Endothelial cell of umbilical vein (primary cell): ENCODE measurements at regions of chr7 and their contacts with region 1.

Region 1: DNA sequence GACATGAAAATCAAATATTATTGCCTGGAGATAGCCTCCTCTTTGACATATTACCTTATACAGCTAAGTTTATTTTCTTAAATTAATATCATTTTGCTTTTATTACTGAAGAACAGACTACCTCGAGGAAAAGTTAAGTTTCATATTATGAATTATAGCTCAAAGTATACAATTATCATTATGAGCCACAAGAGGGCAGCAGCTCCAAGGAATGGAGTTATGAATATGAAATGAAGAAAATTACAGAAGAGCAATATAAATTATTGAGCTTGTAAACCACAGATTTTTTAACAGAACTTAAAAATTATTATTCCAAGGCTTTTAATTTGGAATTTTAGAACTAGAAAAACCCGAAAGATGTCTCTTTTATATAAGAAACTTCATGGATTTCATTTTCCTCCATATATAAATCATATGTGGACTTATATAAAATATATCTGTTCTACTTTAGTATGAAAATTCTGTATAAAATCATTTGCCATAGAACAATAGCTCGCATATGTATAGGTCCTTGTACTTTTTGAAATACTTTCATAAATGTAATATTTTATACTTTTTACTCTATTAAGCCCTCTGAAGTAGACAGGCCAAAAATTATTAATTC is 40.1 kb downstream of the IQUB start:
- DNase-seq: peak; percentile 62
- H3K4me3 ChIP-seq: no peak overlapping the region
- H3K27ac ChIP-seq: no peak overlapping the region
- H3K4me1 ChIP-seq: no peaks in the 10 kb centered on the region
- H3K27me3 ChIP-seq: peaks cover 3 to 10% of the 10 kb centered on the region in 2 experiments
- CTCF ChIP-seq: peak; percentile 25 to 37
- POLR2A ChIP-seq: no peak

Region 2: GRCh38 chr7:123472750-123473445 is 21.4 kb before region 1 on chr7:
- CTCF ChIA-PET with region 1: interaction called, 17 read pairs
- POLR2A ChIA-PET with region 1: no interaction called
- dilution Hi-C with region 1: no loop called
- intact Hi-C with region 1: no loop called
- DNase-seq: no peak
- H3K4me3 ChIP-seq: no peak overlapping the region
- H3K27ac ChIP-seq: no peak overlapping the region
- H3K4me1 ChIP-seq: no peaks in the 10 kb centered on the region
- H3K27me3 ChIP-seq: no peaks in the 10 kb centered on the region
- CTCF ChIP-seq: no peak
- POLR2A ChIP-seq: no peak

Region 3: DNA sequence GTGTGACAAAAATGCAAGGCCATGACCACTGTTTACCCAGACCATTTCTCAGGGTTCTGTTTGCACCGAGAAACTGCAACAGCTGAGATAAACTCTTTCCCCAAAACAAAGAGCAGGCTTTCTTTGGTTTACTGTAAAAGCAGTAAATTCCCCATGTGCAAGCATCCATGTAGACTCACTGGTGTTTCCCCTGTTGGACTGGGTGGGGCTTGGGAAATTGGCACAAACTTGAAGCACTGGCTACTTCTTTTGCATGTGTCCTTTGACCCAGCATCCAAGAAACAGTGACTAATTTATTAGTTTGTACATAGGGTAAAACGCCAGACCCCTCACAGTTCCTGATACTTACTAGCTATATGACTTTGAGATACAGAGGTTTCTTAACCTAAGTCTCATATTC is 27.8 kb after region 1 on chr7:
- CTCF ChIA-PET with region 1: interaction called, 34 read pairs
- POLR2A ChIA-PET with region 1: no interaction called
- dilution Hi-C with region 1: no loop called
- intact Hi-C with region 1: no loop called
- DNase-seq: no peak
- H3K4me3 ChIP-seq: no peak overlapping the region
- H3K27ac ChIP-seq: no peak overlapping the region
- H3K4me1 ChIP-seq: no peaks in the 10 kb centered on the region
- H3K27me3 ChIP-seq: no peaks in the 10 kb centered on the region
- CTCF ChIP-seq: no peak
- POLR2A ChIP-seq: no peak

Region 4: GRCh38 chr7:123534383-123535260 is 40.3 kb after region 1 on chr7 and contains the start of gene IQUB:
- CTCF ChIA-PET with region 1: interaction called, 60 read pairs
- POLR2A ChIA-PET with region 1: interaction called, 14 read pairs
- dilution Hi-C with region 1: no loop called
- intact Hi-C with region 1: loop called (anchors 1 kb)
- DNase-seq: peak; percentile 95
- H3K4me3 ChIP-seq: peak within 1 kb of the TSS; percentile 61 to 81 (median 80)
- H3K27ac ChIP-seq: peak within 1 kb of the TSS; percentile 74
- H3K4me1 ChIP-seq: peaks cover 27% of the 10 kb centered on the region
- H3K27me3 ChIP-seq: peaks cover 6 to 13% of the 10 kb centered on the region in 2 experiments
- CTCF ChIP-seq: no peak
- POLR2A ChIP-seq: no peak
- total RNA-seq, gene IQUB: not detected in 2 replicates

Region 5: DNA sequence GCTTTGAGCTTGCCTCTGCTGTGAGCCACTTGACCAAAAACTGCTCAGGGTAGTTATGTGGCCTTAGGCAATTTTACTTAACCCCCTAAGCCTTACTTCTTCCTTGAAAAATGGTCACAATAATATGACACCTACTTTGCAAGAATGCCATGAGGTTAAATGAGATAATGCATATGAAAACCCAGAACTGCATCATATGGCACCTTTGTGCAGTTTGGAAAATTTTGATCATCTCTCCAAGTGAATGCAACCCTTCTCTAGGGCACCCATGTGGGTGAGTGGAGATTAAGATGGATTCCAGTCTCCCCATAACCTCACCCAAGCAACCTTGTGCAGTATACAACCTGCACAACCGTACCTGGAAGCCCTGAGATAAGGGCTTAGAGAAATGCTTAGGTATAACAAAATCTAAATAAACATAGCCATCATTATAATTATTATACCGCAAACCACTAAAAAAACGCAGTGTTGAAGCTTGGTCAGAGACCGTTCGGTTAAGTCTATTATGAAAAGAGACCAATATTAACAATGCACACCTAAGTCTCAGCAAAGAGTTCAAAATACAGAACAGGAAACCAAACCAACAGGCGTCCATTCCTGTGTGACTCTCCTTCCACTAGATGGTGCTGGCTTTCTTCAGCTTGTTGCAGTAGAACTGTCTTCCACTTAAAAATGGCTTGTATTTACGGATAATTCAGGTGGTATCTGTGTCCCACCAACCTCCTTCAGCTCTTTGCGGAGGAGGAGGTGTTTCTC is 86.3 kb after region 1 on chr7:
- CTCF ChIA-PET with region 1: interaction called, 18 read pairs
- POLR2A ChIA-PET with region 1: no interaction called
- dilution Hi-C with region 1: no loop called
- intact Hi-C with region 1: loop called (anchors 5 kb)
- DNase-seq: peak; percentile 61
- H3K4me3 ChIP-seq: no peak overlapping the region
- H3K27ac ChIP-seq: no peak overlapping the region
- H3K4me1 ChIP-seq: no peaks in the 10 kb centered on the region
- H3K27me3 ChIP-seq: no peaks in the 10 kb centered on the region
- CTCF ChIP-seq: peak; percentile 69 to 73
- POLR2A ChIP-seq: no peak

Region 6: DNA sequence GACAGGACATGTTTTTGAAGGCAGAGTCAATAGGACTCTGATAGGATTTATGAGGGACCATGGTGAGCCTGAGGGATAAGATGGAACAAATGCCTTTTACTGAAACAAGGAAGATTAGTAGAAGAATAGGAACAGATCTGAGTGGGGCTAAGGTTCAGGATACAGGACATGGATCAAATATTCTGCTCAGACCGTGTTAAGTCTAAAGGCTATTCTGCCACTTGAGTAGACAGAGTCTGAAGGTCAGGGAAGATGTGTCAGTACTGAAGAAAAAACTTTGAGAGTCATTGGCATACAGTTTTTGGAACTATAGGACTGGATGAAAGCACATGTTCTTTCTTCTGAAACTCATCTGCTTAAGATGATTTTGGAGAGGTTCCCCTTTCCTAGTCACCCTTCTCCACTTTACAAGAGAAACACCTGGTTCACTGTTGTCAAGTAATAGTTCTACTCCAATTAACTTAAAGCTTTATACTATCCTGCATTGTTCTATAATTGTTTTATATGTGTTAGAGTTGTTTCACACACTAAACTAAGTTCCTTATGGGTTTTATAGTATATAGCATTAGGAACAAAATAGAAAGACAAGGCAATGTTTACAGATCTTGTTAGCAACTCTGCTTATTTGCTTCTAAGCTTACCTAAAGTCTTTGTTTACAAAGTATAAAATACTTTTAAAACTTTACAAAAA is 211.1 kb after region 1 on chr7:
- CTCF ChIA-PET with region 1: interaction called, 20 read pairs
- POLR2A ChIA-PET with region 1: no interaction called
- dilution Hi-C with region 1: no loop called
- intact Hi-C with region 1: loop called (anchors 1 kb)
- DNase-seq: no peak
- H3K4me3 ChIP-seq: no peak overlapping the region
- H3K27ac ChIP-seq: no peak overlapping the region
- H3K4me1 ChIP-seq: no peaks in the 10 kb centered on the region
- H3K27me3 ChIP-seq: no peaks in the 10 kb centered on the region
- CTCF ChIP-seq: no peak
- POLR2A ChIP-seq: no peak

Region 7: DNA sequence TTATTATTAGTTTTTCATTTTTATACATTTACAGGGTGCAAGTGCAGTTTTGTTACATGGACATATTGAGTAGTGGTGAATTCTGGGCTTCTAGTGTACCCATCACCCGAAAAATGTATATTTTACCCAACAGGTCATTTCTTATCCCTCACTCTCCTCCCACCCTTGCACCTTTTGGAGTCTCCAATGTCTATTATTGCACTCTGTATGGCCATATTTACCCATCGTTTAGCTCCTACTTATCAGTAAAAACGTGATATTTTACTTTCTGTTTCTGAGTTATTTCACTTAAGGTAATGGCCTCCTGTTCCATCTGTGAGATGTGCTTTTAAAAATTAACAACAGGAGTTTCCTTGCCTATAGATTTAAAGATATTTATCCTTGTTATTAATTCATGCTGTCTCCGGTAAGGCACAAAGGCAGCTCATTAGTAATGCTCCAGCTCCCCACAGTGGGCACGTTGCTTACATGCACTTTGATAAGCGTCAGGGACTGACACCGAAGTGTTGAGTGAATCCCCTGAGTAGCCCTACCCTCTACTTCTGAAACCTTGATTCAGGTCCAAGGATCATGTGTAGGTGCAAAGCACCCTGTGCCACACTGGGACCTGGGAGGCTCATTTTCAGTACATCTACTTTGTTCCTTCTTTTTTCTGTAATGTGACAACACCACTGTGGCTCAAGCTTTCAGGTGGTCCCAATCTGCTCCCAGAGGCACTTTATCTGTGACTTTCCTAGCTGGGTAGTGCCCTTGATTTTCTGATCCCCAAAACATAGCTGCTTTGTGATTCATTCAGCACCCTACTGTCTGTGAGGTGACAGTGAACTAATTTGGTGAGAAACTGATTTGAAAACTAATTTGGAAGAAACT is 377.9 kb after region 1 on chr7:
- CTCF ChIA-PET with region 1: interaction called, 124 read pairs
- POLR2A ChIA-PET with region 1: no interaction called
- dilution Hi-C with region 1: no loop called
- intact Hi-C with region 1: loop called (anchors 1 kb)
- DNase-seq: peak; percentile 74
- H3K4me3 ChIP-seq: no peak overlapping the region
- H3K27ac ChIP-seq: no peak overlapping the region
- H3K4me1 ChIP-seq: no peaks in the 10 kb centered on the region
- H3K27me3 ChIP-seq: no peaks in the 10 kb centered on the region
- CTCF ChIP-seq: peak; percentile 53 to 67
- POLR2A ChIP-seq: no peak